Activated T-helper 2 cell treated with anti-CD3 and anti-CD28 coated beads, Interferon-gamma antibody, Interleukin-2, Interleukin-4, amounts not matched to agents 10 μg/mL and 5 μg/mL and 100 μg/mL, durations not matched to agents 14 hours and 24 hours and 36 hours (primary cell): ENCODE measurements at regions of chr11 and their contacts with region 1.

Region 1: DNA sequence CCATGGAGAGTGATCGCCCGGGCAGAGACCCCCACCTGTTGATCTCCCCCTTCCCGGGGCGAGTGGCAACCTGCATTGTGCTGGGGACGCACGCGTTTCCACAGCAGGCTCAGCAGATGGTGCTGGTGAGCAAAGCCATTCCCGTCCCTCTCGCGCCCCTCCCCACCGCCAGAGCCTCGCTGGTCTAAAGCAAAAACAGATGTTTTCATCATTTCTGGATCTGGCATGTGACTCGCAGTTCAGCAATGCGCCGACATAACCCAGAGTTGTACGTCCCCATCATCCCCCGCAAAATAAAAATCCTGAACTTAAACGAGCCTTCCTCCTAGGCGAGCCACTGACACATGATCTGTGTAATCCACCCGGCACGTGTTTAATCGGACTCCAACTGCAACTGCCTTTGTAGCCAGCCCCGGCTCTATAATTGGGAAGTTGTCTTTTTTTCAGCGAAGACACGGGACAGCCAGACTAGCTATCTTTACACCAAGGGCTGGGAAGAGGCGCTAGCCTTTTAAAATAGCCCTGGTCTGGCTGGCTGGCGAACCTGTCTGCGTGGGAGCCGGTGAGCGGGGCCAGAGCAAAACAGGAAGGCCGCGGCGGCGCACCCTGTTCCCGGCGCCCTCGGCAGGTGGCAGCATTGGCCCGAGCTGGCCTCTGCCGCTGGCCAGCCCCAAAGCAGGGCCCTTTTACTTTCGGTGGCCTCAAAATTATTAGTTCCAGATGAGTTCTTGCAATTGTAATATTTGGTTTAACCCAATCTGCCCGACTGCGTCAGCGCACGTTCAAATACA is 203.0 kb upstream of the SORL1-AS1 start:
- DNase-seq: peak; percentile 55
- H3K4me3 Mint-ChIP-seq: peak overlapping the region; percentile 77
- H3K27ac Mint-ChIP-seq: peak overlapping the region; percentile 34
- H3K4me1 Mint-ChIP-seq: peaks cover 16% of the 10 kb centered on the region
- H3K27me3 Mint-ChIP-seq: peaks cover 27% of the 10 kb centered on the region

Region 2: GRCh38 chr11:120835601-120836228 is 820.0 kb before region 1 on chr11:
- intact Hi-C with region 1: loop called (anchors 5 kb)
- DNase-seq: peak; percentile 13
- H3K4me3 Mint-ChIP-seq: no peak overlapping the region
- H3K27ac Mint-ChIP-seq: peak overlapping the region; percentile 47
- H3K4me1 Mint-ChIP-seq: peaks cover 18% of the 10 kb centered on the region
- H3K27me3 Mint-ChIP-seq: peaks cover 17% of the 10 kb centered on the region

Region 3: DNA sequence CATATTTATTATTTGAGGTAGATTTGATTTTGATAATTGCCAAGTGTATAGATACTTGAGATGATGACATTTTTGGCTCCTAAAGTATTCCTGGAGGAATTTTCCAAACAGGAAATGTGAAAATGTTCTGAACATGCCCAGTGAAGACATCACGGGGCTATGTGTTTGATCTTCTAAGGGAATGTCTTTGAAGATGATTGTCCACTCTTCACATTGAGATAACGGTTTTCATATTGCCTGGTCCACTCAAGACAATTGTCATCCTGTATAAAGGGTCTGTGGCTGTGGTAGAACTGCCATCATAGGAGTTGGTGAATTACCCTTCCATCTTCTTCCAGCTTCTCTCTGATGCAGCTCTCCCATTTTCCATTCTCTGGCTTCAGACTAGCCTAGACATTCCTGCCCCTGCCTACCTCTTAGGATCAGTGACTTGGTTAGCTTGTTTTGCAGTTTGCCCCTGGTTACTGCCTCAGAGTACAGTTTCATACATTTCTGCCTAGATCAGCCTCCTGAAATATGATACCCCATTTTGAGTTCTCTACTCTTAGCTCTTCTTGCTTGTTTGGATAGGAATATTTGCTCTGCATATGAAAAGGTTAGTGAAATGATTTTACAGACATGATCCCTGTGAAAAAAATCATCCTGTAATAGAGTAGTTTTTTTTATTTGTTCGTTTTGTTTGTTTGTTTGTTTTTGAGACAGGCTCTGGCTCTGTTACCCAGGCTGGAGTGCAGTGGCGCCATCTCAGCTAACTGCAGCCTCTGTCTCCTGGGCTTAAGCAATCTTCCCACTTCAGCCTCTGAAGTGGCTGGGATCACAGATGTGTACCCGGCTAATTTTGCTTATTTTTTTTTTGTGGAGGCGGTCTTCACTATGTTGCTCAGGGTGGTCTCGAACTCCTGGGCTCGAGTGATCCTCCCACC is 91.6 kb before region 1 on chr11:
- intact Hi-C with region 1: no loop called
- DNase-seq: no peak
- H3K4me3 Mint-ChIP-seq: no peak overlapping the region
- H3K27ac Mint-ChIP-seq: no peak overlapping the region
- H3K4me1 Mint-ChIP-seq: peaks cover 2% of the 10 kb centered on the region
- H3K27me3 Mint-ChIP-seq: no peaks in the 10 kb centered on the region

Region 4: DNA sequence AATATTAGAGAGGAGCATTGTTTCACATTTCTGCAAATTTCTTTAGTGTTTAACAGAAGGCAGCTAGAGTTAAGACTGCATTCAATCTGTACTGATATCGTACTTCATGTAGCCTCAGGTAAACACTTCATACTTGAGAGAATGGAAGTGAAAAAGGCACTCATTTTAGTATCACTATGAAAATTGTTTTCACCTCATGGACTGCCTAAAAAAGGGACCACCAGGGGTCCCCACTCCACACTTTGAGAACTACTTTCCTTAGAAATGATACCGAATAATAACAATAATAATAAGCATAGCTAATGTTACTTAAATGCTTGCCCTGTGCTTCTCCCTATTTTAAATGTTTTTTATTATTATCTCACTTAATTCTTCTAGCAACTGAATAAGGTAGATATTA is 365.2 kb after region 1 on chr11:
- intact Hi-C with region 1: no loop called
- DNase-seq: no peak
- H3K4me3 Mint-ChIP-seq: no peak overlapping the region
- H3K27ac Mint-ChIP-seq: no peak overlapping the region
- H3K4me1 Mint-ChIP-seq: no peaks in the 10 kb centered on the region
- H3K27me3 Mint-ChIP-seq: no peaks in the 10 kb centered on the region

Region 5: DNA sequence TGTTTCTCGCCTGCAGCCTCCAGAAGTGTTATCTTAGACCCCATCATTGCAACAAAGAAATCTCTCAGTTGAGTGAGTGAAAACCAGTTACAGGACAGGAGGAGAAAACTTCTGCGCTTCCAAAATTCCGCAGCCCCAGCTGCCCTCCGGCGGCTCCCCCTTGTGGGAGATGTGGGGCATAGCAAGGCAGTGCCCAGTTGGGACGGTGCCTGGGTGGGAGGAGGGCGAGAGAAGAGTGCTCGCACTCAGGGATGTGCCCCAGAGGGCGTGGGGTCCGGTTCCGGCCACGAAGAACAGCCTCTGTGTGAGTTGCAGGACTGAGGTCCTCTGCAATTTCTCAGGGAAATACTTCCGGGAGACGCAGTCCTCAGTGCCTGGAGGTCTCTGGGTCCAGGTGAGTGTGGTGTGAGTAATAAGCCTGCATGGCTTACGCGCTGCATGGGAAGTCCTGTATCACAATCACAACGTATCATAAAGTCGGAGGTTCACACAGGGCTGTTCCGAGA is 547.3 kb after region 1 on chr11:
- intact Hi-C with region 1: loop called (anchors 1 kb)
- DNase-seq: peak; percentile 20
- H3K4me3 Mint-ChIP-seq: no peak overlapping the region
- H3K27ac Mint-ChIP-seq: no peak overlapping the region
- H3K4me1 Mint-ChIP-seq: no peaks in the 10 kb centered on the region
- H3K27me3 Mint-ChIP-seq: peaks cover 11% of the 10 kb centered on the region

Region 6: DNA sequence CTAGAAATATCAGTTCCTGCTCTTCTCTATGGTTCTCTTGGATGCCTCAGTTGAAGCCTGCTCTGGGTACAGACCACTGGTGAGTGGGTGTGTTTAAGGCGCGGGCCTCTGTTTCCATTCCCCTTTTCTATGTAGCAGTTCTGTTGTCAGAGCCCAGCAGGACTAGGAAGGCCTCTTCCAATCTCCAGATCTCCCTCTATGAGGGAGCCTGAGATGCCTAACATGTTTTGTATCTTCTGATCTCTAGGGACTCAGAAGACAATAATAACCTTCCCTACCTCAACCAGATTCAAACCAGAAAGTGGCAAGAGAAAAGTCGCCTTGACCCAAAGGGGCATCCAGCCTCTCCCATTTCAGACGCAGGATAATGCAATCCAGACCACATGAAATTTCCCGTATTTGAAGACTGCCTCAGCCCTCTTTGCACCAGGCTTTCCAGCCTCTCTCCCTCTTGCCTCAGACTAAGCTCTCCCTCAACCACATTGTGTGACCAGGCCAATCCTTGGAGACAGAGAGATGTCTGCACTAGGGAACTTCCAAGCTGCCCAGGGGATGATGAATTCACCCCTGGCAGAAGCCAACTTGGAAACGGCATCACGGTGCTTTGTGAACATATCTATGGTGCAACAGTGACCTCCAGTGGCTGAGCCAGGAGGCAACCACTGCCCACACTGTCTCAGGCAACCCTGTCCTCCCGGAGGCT is 849.7 kb after region 1 on chr11:
- intact Hi-C with region 1: loop called (anchors 5 kb)
- DNase-seq: peak; percentile 10
- H3K4me3 Mint-ChIP-seq: no peak overlapping the region
- H3K27ac Mint-ChIP-seq: no peak overlapping the region
- H3K4me1 Mint-ChIP-seq: no peaks in the 10 kb centered on the region
- H3K27me3 Mint-ChIP-seq: peaks cover 11% of the 10 kb centered on the region